ENCODE measurements at regions of chr19 and their contacts with region 1.

Region 1: DNA sequence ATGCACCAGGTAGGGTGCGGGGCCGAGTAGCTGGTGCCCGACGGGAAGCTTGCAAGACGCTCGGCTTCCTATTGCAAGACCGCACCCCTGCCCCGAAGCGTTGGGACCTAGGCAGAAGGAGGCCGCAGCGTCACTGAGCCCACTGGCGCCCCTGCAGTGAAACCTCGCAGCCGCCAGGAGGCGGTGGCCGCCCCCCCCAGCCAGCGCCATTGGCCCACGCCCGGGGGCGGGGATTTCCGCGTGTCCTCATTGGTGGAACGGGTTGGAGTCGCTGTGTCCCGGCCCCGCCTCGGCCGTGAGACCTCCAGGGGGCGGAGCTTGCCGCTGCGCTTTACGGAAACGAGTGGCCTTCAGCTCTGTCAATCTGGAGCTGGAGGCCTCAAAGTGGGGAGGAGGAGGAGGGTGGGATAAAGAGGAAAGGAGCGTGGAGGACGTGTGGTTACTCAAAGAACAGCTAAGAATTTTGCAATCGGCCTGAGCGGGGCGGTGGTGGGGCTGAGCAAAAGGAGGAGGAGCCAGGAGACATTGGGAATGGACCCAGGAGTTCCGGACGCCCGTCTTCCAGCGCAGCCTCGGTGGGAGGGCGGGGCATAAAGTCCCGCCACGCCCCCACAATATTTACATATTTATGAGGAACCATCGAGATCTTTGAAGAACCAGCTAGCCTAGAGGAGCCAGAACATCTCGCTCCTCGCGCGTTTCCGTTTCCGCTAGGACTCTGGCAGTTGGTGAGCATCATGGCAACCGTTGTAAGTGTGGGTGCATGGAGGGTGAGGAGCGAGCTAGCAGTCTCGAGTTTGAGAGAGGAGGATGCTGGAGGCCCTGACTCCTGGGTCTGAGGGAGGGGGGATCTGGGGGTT is at the starts of genes GYS1 and RUVBL2:
- DNase-seq: peak; percentile 100
- ATAC-seq: peak; percentile 91
- H3K4me3 ChIP-seq: peak within 1 kb of the TSS; percentile 61 to 94 (median 79)
- H3K4me3 Mint-ChIP-seq: peak within 1 kb of the TSS; percentile 94
- H3K27ac ChIP-seq: peak within 1 kb of the TSS; percentile 77 to 89
- H3K27ac Mint-ChIP-seq: peak within 1 kb of the TSS; percentile 92
- H3K4me1 ChIP-seq: peaks cover 15 to 27% of the 10 kb centered on the region in 2 donors
- H3K4me1 Mint-ChIP-seq: peaks cover 34% of the 10 kb centered on the region
- H3K27me3 ChIP-seq: no peaks in the 10 kb centered on the region
- H3K27me3 Mint-ChIP-seq: no peaks in the 10 kb centered on the region
- CTCF ChIP-seq: peak; percentile 99
- total RNA-seq, gene GYS1: 62.7 and 63.0 TPM in 2 replicates
- total RNA-seq, gene RUVBL2: 36.1 and 44.8 TPM in 2 replicates

Region 2: DNA sequence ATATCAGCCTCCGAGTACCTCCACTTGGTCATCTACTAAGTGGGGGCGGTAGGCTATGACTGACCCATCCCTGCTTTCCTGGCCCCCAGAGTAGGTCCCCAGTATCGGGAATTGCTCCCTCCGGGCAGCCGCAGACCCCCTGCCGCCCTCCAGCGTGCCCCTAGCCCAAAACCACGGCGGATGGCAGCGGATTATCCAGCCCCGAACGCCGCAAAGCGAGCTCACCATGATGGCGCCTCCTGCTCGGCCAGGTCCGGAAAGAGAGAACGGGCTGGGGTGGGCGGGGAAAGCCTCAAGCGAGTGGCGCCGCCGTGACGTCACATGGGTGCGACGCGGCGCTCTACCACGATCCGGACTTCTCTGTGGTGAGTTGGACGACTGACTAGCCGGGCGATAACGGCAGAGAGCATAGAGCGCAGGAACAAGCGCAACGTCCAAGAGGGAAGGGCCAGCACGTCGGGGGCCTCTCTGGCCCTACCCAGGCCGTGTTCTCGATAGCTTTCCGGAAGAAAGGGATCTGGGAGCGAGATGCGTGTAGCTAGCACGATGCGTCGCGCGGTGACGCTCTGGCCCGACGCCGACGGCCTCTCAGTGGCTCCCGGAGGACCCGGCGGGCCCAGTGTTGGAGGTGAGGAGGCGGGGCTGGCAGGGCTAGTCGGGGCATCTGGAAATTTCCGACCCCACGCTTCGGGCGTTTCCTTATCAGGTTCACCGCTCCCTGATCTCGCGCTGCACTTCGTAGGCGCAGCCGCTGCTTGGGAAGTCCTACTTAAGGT is 374.3 kb before region 1 on chr19 and contains the starts of genes RPL18 and SPHK2:
- CTCF ChIA-PET with region 1: no interaction called
- POLR2A ChIA-PET with region 1: interaction called, 10 read pairs
- intact Hi-C with region 1: no loop called
- DNase-seq: peak; percentile 99
- ATAC-seq: peak; percentile 82
- H3K4me3 ChIP-seq: peak within 1 kb of the TSS; percentile 95 to 100 (median 99)
- H3K4me3 Mint-ChIP-seq: peak within 1 kb of the TSS; percentile 98
- H3K27ac ChIP-seq: peak within 1 kb of the TSS; percentile 87 to 91
- H3K27ac Mint-ChIP-seq: peak within 1 kb of the TSS; percentile 98
- H3K4me1 ChIP-seq: peaks cover 25 to 45% of the 10 kb centered on the region in 2 donors
- H3K4me1 Mint-ChIP-seq: peaks cover 51% of the 10 kb centered on the region
- H3K27me3 ChIP-seq: no peaks in the 10 kb centered on the region
- H3K27me3 Mint-ChIP-seq: no peaks in the 10 kb centered on the region
- CTCF ChIP-seq: no peak
- total RNA-seq, gene RPL18: 2,217 and 2,248 TPM in 2 replicates
- total RNA-seq, gene SPHK2: 45.4 and 47.3 TPM in 2 replicates

Region 3: GRCh38 chr19:48835734-48836088 is 157.7 kb before region 1 on chr19:
- CTCF ChIA-PET with region 1: interaction called, 6 read pairs
- POLR2A ChIA-PET with region 1: interaction called, 4 read pairs
- intact Hi-C with region 1: loop called (anchors 1 kb)
- DNase-seq: peak; percentile 96
- ATAC-seq: peak; percentile 87
- H3K4me3 ChIP-seq: peak overlapping the region in 4 of 5 experiments; percentile 25 to 59 (median 54)
- H3K4me3 Mint-ChIP-seq: peak overlapping the region; percentile 98
- H3K27ac ChIP-seq: peak overlapping the region in 1 of 2 donors; percentile 56
- H3K27ac Mint-ChIP-seq: peak overlapping the region; percentile 93
- H3K4me1 ChIP-seq: peaks cover 16 to 25% of the 10 kb centered on the region in 2 donors
- H3K4me1 Mint-ChIP-seq: peaks cover 25% of the 10 kb centered on the region
- H3K27me3 ChIP-seq: peaks cover 0 to 13% (median 1%) of the 10 kb centered on the region in 4 experiments
- H3K27me3 Mint-ChIP-seq: no peaks in the 10 kb centered on the region
- CTCF ChIP-seq: peak; percentile 82

Region 4: DNA sequence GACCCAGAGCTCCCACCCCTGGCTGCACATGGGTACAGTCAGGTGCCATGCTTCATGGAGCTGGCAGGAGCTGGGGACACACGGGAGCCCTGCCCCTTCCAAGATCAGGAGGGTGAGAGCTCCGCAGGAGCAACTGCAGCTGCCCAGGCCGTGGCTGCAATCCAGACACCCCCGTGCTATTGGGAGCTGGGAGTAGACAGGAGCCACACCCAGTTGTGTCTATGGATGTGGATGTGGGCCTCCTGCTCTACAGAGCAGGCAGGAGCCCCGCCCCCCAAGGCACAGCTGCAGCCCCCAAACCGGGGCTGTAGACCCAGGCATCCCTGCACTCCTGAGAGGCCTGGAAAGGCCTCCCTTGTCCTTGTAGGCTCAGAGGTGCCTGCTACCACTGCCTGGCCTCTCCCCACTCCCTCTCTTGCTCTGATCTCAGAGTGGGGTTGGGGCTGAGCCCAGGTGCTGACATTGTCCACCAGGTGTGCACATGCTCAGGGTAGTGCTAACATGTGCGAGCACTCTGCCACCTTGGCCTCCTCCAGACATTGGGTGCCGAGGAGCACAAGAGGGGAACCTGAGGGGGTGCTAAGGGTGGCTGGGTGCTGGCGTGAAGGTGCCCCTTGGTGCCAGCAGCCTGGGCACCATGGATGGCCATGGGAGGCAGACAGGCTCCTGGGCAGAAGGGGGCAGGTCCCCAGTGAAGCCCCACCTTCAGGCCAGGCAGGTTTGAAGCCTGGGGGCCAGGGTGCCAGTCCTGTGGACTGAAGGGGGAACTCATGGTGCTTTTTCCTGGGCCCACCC is 46.7 kb before region 1 on chr19:
- CTCF ChIA-PET with region 1: no interaction called
- POLR2A ChIA-PET with region 1: no interaction called
- intact Hi-C with region 1: no loop called
- DNase-seq: no peak
- ATAC-seq: no peak
- H3K4me3 ChIP-seq: no peak overlapping the region
- H3K4me3 Mint-ChIP-seq: no peak overlapping the region
- H3K27ac ChIP-seq: no peak overlapping the region
- H3K27ac Mint-ChIP-seq: no peak overlapping the region
- H3K4me1 ChIP-seq: no peaks in the 10 kb centered on the region
- H3K4me1 Mint-ChIP-seq: no peaks in the 10 kb centered on the region
- H3K27me3 ChIP-seq: no peaks in the 10 kb centered on the region
- H3K27me3 Mint-ChIP-seq: no peaks in the 10 kb centered on the region
- CTCF ChIP-seq: no peak

Region 5: DNA sequence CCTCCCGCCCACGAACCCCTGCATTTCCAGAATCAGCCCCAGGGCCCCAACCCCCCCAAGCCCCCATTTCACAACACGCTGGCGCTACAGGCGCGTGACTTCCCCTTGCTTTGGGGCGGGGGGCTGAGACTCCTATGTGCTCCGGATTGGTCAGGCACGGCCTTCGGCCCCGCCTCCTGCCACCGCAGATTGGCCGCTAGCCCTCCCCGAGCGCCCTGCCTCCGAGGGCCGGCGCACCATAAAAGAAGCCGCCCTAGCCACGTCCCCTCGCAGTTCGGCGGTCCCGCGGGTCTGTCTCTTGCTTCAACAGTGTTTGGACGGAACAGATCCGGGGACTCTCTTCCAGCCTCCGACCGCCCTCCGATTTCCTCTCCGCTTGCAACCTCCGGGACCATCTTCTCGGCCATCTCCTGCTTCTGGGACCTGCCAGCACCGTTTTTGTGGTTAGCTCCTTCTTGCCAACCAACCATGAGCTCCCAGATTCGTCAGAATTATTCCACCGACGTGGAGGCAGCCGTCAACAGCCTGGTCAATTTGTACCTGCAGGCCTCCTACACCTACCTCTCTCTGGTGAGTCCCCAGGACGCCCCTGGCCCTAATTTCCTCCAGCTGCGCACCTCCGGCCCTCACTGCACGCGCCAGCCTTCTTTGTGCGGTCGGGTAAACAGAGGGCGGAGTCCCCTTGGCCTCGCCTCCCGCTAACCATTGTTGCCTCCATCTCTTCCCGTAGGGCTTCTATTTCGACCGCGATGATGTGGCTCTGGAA is 28.2 kb before region 1 on chr19 and contains the start of gene FTL:
- CTCF ChIA-PET with region 1: interaction called, 17 read pairs
- POLR2A ChIA-PET with region 1: interaction called, 17 read pairs
- intact Hi-C with region 1: loop called (anchors 1 kb)
- DNase-seq: peak; percentile 96
- ATAC-seq: peak; percentile 83
- H3K4me3 ChIP-seq: peak within 1 kb of the TSS; percentile 73 to 90 (median 84)
- H3K4me3 Mint-ChIP-seq: peak within 1 kb of the TSS; percentile 100
- H3K27ac ChIP-seq: peak within 1 kb of the TSS; percentile 75 to 84
- H3K27ac Mint-ChIP-seq: peak within 1 kb of the TSS; percentile 99
- H3K4me1 ChIP-seq: peaks cover 41 to 57% of the 10 kb centered on the region in 2 donors
- H3K4me1 Mint-ChIP-seq: peaks cover 70% of the 10 kb centered on the region
- H3K27me3 ChIP-seq: no peaks in the 10 kb centered on the region
- H3K27me3 Mint-ChIP-seq: no peaks in the 10 kb centered on the region
- CTCF ChIP-seq: no peak
- total RNA-seq, gene FTL: 881 and 937 TPM in 2 replicates

Region 6: DNA sequence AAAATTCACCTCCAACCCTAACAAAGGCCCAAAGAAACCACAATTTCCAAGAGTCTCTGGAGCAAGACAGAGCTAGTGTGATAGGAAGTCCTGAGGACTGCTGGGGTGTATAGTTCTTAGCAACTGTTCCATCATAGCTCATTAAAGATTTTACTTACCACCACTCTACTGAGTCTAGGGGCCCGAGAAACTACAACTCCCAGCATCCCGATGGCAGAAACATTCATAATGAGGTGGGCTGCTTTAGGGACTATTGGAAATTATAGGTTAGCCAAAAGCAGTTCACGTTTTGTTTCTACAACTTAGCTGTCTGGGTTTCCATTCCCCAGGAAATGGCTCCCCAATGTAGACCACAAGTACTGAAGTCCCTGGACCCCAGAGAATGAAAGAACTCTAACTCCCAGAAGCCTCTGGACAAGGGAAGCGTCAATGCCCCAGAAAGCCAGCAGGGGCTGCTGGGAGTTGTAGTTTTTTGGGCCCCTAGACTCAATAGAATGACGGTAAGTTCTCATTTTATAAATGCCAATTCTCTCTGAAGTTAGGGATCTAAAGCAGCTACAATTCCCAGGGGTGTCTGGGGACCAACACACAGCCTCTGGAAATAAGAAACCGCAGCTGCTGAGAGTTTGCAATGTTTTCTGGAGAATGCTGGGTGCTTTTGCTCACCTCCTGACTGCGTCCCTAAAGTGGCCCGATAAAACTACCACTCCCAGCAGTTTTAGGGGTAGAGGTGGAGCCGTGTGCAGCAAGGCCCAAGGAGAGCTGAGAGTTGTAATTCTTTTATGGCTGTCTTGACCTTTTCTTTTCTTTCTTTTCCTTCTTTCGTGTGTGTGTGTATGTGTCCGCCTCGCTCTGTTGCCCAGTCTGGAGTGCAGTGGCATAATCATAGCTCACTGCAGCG is 17.2 kb before region 1 on chr19:
- CTCF ChIA-PET with region 1: interaction called, 17 read pairs
- POLR2A ChIA-PET with region 1: interaction called, 3 read pairs
- intact Hi-C with region 1: loop called (anchors 2 kb)
- DNase-seq: peak; percentile 62
- ATAC-seq: peak; percentile 66
- H3K4me3 ChIP-seq: no peak overlapping the region
- H3K4me3 Mint-ChIP-seq: no peak overlapping the region
- H3K27ac ChIP-seq: no peak overlapping the region
- H3K27ac Mint-ChIP-seq: peak overlapping the region; percentile 32
- H3K4me1 ChIP-seq: peaks cover 0 to under 1% of the 10 kb centered on the region in 2 donors
- H3K4me1 Mint-ChIP-seq: peaks cover 4% of the 10 kb centered on the region
- H3K27me3 ChIP-seq: no peaks in the 10 kb centered on the region
- H3K27me3 Mint-ChIP-seq: no peaks in the 10 kb centered on the region
- CTCF ChIP-seq: no peak

Region 7: GRCh38 chr19:49085020-49085867 is 91.8 kb after region 1 on chr19 and contains the start of gene SNRNP70:
- CTCF ChIA-PET with region 1: no interaction called
- POLR2A ChIA-PET with region 1: no interaction called
- intact Hi-C with region 1: loop called (anchors 1 kb)
- DNase-seq: peak; percentile 100
- ATAC-seq: peak; percentile 95
- H3K4me3 ChIP-seq: peak within 1 kb of the TSS; percentile 74 to 89 (median 82)
- H3K4me3 Mint-ChIP-seq: peak within 1 kb of the TSS; percentile 93
- H3K27ac ChIP-seq: peak within 1 kb of the TSS; percentile 66 to 90
- H3K27ac Mint-ChIP-seq: peak within 1 kb of the TSS; percentile 87
- H3K4me1 ChIP-seq: peaks cover 20 to 28% of the 10 kb centered on the region in 2 donors
- H3K4me1 Mint-ChIP-seq: peaks cover 33% of the 10 kb centered on the region
- H3K27me3 ChIP-seq: peaks cover 0 to 3% (median 0%) of the 10 kb centered on the region in 4 experiments
- H3K27me3 Mint-ChIP-seq: peaks cover 5% of the 10 kb centered on the region
- CTCF ChIP-seq: no peak
- total RNA-seq, gene SNRNP70: 598 and 610 TPM in 2 replicates

Region 8: DNA sequence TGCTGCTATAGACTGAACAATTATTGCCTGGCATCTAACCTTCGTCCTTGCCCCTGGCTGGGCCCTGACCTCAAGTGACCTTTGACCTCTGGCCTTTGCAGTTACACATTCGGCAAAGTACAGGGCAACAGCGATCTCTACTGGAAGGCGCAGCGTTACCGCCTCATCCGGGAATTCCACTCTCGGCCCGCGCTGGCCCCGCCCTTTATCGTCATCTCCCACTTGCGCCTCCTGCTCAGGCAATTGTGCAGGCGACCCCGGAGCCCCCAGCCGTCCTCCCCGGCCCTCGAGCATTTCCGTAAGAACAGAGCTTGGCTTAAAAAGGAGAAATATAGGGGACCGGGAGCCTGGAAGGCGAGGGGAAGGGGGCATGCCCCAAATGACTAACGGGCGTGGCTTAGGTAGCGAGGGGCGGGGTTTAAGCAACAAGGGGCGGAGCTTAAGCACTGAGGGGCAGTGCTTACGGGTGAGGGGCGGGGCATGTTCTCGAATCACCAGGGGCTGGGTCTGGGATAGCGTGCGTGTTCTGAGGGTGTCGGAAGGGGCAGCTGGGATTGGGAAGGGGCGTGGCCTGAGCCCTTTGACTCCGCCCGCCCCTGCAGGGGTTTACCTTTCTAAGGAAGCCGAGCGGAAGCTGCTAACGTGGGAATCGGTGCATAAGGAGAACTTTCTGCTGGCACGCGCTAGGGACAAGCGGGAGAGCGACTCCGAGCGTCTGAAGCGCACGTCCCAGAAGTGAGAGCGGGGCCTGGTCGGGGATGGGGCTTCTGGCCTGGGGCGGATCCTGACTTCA is 216.9 kb after region 1 on chr19:
- CTCF ChIA-PET with region 1: interaction called, 3 read pairs
- POLR2A ChIA-PET with region 1: no interaction called
- intact Hi-C with region 1: loop called (anchors 2 kb)
- DNase-seq: peak; percentile 62
- ATAC-seq: peak; percentile 67
- H3K4me3 ChIP-seq: no peak overlapping the region
- H3K4me3 Mint-ChIP-seq: peak overlapping the region; percentile 18
- H3K27ac ChIP-seq: no peak overlapping the region
- H3K27ac Mint-ChIP-seq: peak overlapping the region; percentile 61
- H3K4me1 ChIP-seq: peaks cover 12 to 37% of the 10 kb centered on the region in 2 donors
- H3K4me1 Mint-ChIP-seq: peaks cover 41% of the 10 kb centered on the region
- H3K27me3 ChIP-seq: no peaks in the 10 kb centered on the region
- H3K27me3 Mint-ChIP-seq: no peaks in the 10 kb centered on the region
- CTCF ChIP-seq: no peak